K562 (cell line): ENCODE measurements at regions of chr16 and their contacts with region 1.

Region 1: DNA sequence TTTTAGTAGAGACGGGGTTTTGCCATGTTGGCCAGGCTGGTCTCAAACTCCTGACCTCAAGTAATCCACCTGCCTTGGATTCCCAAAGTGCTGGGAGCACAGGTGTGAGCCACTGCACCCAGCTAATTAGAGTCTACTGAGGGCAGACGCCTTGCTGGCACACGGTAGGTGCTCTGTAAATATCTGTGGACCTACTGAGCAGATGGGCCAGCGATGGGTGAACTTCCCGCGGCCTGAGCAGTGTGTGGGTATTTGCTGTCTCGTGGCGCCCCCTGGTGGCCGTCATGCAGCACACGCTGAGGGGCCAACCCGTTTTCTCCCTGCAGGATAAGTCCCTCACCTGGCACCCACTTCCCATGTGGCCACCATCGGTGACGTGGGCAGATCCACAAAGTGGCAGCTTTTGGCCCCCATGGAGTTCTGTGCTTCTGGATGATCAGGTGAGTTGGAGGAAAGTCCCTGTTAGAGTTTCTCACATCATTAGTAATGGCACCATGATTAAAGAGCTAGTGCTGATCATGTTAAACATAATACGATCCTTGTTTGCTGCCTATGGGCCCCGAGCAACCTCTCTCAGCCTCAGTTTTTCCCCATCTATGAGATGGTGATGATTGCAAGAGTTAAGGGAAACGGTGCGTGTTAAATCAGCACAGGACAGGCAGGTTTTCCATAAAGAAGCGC is 40.7 kb downstream of the ZDHHC7 start:
- DNase-seq: peak; percentile 83 to 93 (median 85)
- ATAC-seq: peak; percentile 86
- H3K4me3 ChIP-seq: no peak overlapping the region
- H3K27ac ChIP-seq: no peak overlapping the region
- H3K4me1 ChIP-seq: peaks cover 13 to 51% of the 10 kb centered on the region in 2 experiments; a peak in 4 of 5 replicates
- H3K27me3 ChIP-seq: peaks cover 0 to 19% of the 10 kb centered on the region in 2 experiments; a peak in 3 of 5 replicates
- CTCF ChIP-seq: peak; percentile 96 to 98 (median 97)
- EP300 ChIP-seq: no peak
- POLR2A ChIP-seq: no peak
- RAD21 ChIP-seq: peak; percentile 98 to 99

Region 2: GRCh38 chr16:84511180-84511824 is 459.3 kb before region 1 on chr16:
- CTCF ChIA-PET with region 1: interaction called, 9 read pairs
- POLR2A ChIA-PET with region 1: no interaction called
- in situ Hi-C with region 1: loop called (anchors 5 kb)
- intact Hi-C with region 1: loop called (anchors 2 kb)
- DNase-seq: peak; percentile 76 to 88 (median 80)
- ATAC-seq: peak; percentile 88
- H3K4me3 ChIP-seq: no peak overlapping the region
- H3K27ac ChIP-seq: no peak overlapping the region
- H3K4me1 ChIP-seq: peaks cover 7 to 16% of the 10 kb centered on the region in 2 experiments; a peak in 4 of 5 replicates
- H3K27me3 ChIP-seq: peaks cover 0 to 7% of the 10 kb centered on the region in 2 experiments; a peak in 1 of 5 replicates
- CTCF ChIP-seq: peak; percentile 89 to 99 (median 93)
- EP300 ChIP-seq: no peak
- POLR2A ChIP-seq: no peak
- RAD21 ChIP-seq: peak; percentile 97 to 99

Region 3: DNA sequence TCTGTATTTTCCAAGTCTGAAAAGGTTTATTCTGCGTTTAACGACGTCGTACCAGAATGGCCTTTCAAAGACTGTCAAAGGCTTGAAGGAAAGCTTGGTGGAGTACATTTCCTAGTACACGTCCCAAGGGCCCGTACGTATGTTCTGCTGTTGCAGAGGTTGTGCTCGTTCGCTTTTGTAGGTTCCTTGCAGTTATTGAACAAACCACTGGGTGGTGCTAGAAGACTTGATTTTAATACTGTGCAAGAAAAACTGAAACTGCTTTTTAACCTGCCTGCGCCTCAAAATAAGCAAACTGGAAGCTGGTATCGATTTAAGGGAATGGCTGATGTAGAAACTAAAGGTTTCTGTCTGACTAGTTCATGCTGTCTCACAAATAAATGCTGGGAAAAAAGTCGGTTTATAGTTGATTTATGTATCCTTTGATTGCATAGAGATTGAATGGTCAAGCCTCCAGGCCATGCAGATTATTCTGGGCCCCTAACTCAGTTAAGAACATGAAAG is 216.2 kb before region 1 on chr16:
- CTCF ChIA-PET with region 1: interaction called, 32 read pairs
- POLR2A ChIA-PET with region 1: interaction called, 4 read pairs
- in situ Hi-C with region 1: loop called (anchors 5 kb)
- intact Hi-C with region 1: loop called (anchors 1 kb)
- DNase-seq: peak; percentile 74 to 89 (median 77)
- ATAC-seq: peak; percentile 91
- H3K4me3 ChIP-seq: no peak overlapping the region
- H3K27ac ChIP-seq: no peak overlapping the region
- H3K4me1 ChIP-seq: peaks cover 0 to 18% of the 10 kb centered on the region in 2 experiments; a peak in 3 of 5 replicates
- H3K27me3 ChIP-seq: no peaks in the 10 kb centered on the region
- CTCF ChIP-seq: peak; percentile 76 to 91 (median 88)
- EP300 ChIP-seq: no peak
- POLR2A ChIP-seq: no peak
- RAD21 ChIP-seq: peak; percentile 85 to 90

Region 4: GRCh38 chr16:84925092-84925772 is 45.4 kb before region 1 on chr16:
- CTCF ChIA-PET with region 1: interaction called, 47 read pairs
- POLR2A ChIA-PET with region 1: interaction called, 8 read pairs
- in situ Hi-C with region 1: loop called (anchors 5 kb)
- intact Hi-C with region 1: loop called (anchors 1 kb)
- DNase-seq: peak; percentile 85 to 88 (median 86)
- ATAC-seq: peak; percentile 90
- H3K4me3 ChIP-seq: no peak overlapping the region
- H3K27ac ChIP-seq: no peak overlapping the region
- H3K4me1 ChIP-seq: peaks cover 10 to 54% of the 10 kb centered on the region in 2 experiments
- H3K27me3 ChIP-seq: peaks cover 3 to 10% of the 10 kb centered on the region in 2 experiments; a peak in 2 of 5 replicates
- CTCF ChIP-seq: peak; percentile 95 to 99 (median 97)
- EP300 ChIP-seq: no peak
- POLR2A ChIP-seq: no peak
- RAD21 ChIP-seq: peak; percentile 98 to 99

Region 5: DNA sequence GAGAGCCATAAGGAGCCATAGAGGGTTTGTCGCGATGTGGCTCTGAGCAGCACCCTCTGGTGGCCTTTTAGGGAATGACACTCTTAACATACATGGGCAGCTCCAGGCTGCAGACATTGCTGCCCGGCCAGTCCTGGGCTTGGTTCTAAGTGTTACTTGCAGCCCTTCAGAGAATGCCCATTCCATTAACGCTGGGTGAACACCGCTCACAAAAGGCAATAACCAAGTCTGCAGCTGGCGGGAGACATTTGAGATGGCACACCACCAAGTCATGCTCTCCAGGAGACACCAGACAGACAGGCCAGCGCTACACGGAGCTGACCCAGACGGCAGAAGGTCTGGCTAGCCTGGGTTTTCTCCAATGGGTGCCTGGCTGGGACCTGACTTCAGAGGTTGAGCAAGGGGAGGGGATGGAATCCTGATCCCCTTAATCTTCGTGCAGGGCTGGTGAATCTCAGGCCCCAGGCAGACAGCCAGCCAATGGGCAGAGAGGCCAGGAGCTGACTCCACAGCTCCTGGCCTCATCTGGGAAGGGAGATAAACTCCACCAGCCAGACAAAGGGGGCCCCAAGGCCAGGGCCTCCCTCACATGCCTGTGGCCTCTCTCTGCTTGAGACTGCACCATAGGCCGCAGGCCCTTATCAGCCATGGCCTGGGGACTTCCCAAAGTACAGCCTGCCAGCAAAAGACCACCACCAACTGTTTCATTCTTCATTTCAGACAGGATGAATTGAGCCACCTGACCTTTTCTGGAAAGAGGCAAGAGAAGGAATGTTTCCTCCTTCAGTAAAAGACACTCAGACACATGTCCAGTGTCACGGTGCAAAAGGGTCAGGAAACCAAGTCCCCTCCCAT is 18.0 kb before region 1 on chr16:
- CTCF ChIA-PET with region 1: no interaction called
- POLR2A ChIA-PET with region 1: interaction called, 7 read pairs
- in situ Hi-C with region 1: no loop called
- intact Hi-C with region 1: loop called (anchors 2 kb)
- DNase-seq: peak; percentile 90 to 99 (median 94)
- ATAC-seq: peak; percentile 95
- H3K4me3 ChIP-seq: no peak overlapping the region
- H3K27ac ChIP-seq: peak overlapping the region; percentile 67
- H3K4me1 ChIP-seq: peaks cover 21 to 56% of the 10 kb centered on the region in 2 experiments
- H3K27me3 ChIP-seq: no peaks in the 10 kb centered on the region
- CTCF ChIP-seq: peak; percentile 91 to 98 (median 93)
- EP300 ChIP-seq: peak; percentile 94
- POLR2A ChIP-seq: no peak
- RAD21 ChIP-seq: peak; percentile 83 to 88

Region 6: GRCh38 chr16:84959784-84960417 is 10.7 kb before region 1 on chr16:
- CTCF ChIA-PET with region 1: interaction called, 3 read pairs
- POLR2A ChIA-PET with region 1: interaction called, 10 read pairs
- in situ Hi-C with region 1: no loop called
- intact Hi-C with region 1: no loop called
- DNase-seq: peak in 3 of 4 experiments; percentile 47 to 63 (median 60)
- ATAC-seq: no peak
- H3K4me3 ChIP-seq: no peak overlapping the region
- H3K27ac ChIP-seq: no peak overlapping the region
- H3K4me1 ChIP-seq: peaks cover 3 to 23% of the 10 kb centered on the region in 2 experiments; a peak in 2 of 5 replicates
- H3K27me3 ChIP-seq: peaks cover 14 to 19% of the 10 kb centered on the region in 2 experiments; a peak in 3 of 5 replicates
- CTCF ChIP-seq: no peak
- EP300 ChIP-seq: no peak
- POLR2A ChIP-seq: no peak
- RAD21 ChIP-seq: no peak

Region 7: GRCh38 chr16:85055503-85056210 is 85.1 kb after region 1 on chr16:
- CTCF ChIA-PET with region 1: no interaction called
- POLR2A ChIA-PET with region 1: interaction called, 3 read pairs
- in situ Hi-C with region 1: no loop called
- intact Hi-C with region 1: loop called (anchors 1 kb)
- DNase-seq: peak in 3 of 4 experiments; percentile 39 to 83 (median 58)
- ATAC-seq: peak; percentile 73
- H3K4me3 ChIP-seq: peak overlapping the region; percentile 3; the same call in 1 of the 2 replicates
- H3K27ac ChIP-seq: peak overlapping the region; percentile 67
- H3K4me1 ChIP-seq: peaks cover 37 to 43% of the 10 kb centered on the region in 2 experiments
- H3K27me3 ChIP-seq: no peaks in the 10 kb centered on the region
- CTCF ChIP-seq: no peak
- EP300 ChIP-seq: peak; percentile 68
- POLR2A ChIP-seq: no peak
- RAD21 ChIP-seq: peak; percentile 26 to 38; a peak in 2 of 4 replicates